ENCODE measurements at regions of chr2 and their contacts with region 1.

Region 1: DNA sequence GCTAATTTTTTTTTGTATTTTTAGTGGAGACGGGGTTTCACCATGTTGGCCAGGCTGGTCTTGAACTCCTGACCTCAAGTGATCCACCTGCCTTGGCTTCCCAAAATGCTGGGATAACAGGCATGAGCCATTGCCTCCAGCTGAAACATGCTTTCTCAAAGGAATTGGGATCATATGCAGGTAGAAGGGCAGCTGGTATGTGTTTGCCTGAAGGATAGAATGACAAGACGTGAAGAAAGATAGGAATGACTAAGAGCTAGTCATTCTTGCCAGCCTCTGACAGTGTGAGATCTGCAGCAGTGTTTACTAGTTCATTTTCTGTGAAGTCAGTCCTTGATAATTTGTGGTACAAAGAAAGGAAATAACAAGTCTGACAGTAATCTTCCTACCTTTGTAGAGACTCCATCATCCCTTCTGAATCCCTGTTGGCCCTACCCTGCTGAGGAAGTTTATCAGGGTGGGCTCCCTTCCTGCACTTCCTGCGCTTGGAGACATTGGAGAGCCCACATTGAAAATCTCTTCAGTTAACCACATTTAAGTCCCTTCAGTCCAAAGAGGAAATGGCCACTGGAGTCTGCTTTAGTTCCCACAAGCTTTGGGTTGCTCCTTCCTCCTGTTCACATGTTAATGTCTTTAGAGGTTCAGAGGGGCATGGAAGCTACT is 14.7 kb downstream of the CFLAR start:
- DNase-seq: peak; percentile 45
- H3K4me3 Mint-ChIP-seq: peak overlapping the region; percentile 90
- H3K27ac Mint-ChIP-seq: peak overlapping the region; percentile 99
- H3K4me1 Mint-ChIP-seq: peaks cover 56% of the 10 kb centered on the region
- H3K27me3 Mint-ChIP-seq: no peaks in the 10 kb centered on the region

Region 2: GRCh38 chr2:200888704-200889625 is 241.7 kb before region 1 on chr2 and contains the starts of genes NIF3L1 and PPIL3:
- intact Hi-C with region 1: loop called (anchors 1 kb)
- DNase-seq: peak; percentile 96
- H3K4me3 Mint-ChIP-seq: peak within 1 kb of the TSS; percentile 97
- H3K27ac Mint-ChIP-seq: peak within 1 kb of the TSS; percentile 99
- H3K4me1 Mint-ChIP-seq: peaks cover 54% of the 10 kb centered on the region
- H3K27me3 Mint-ChIP-seq: no peaks in the 10 kb centered on the region
- total RNA-seq, gene NIF3L1: 26.6 and 27.3 TPM in 2 replicates
- total RNA-seq, gene PPIL3: 44.2 TPM in 2 replicates

Region 3: GRCh38 chr2:201149064-201149820 is 18.6 kb after region 1 on chr2:
- intact Hi-C with region 1: loop called (anchors 2 kb)
- DNase-seq: no peak
- H3K4me3 Mint-ChIP-seq: no peak overlapping the region
- H3K27ac Mint-ChIP-seq: peak overlapping the region; percentile 22
- H3K4me1 Mint-ChIP-seq: peaks cover 50% of the 10 kb centered on the region
- H3K27me3 Mint-ChIP-seq: no peaks in the 10 kb centered on the region

Measured in activated T-helper 1 cell treated with anti-CD3 and anti-CD28 coated beads, Interleukin-12 subunit alpha, Interleukin-12 subunit beta, Interleukin-2, Interleukin-4 antibody, amounts not matched to agents 30 ng/mL and 10 ng/mL and 1 ng/mL, durations not matched to agents 14 hours and 24 hours and 36 hours (primary cell).